ENCODE measurements at regions of chr6 and their contacts with region 1.

Region 1: GRCh38 chr6:33161354-33162331 is 30.6 kb downstream of the COL11A2 start:
- H3K4me3 Mint-ChIP-seq: peak overlapping the region; percentile 78
- H3K27ac Mint-ChIP-seq: peak overlapping the region; percentile 88
- H3K4me1 Mint-ChIP-seq: peaks cover 35% of the 10 kb centered on the region
- H3K27me3 Mint-ChIP-seq: peaks cover 20% of the 10 kb centered on the region

Region 2: DNA sequence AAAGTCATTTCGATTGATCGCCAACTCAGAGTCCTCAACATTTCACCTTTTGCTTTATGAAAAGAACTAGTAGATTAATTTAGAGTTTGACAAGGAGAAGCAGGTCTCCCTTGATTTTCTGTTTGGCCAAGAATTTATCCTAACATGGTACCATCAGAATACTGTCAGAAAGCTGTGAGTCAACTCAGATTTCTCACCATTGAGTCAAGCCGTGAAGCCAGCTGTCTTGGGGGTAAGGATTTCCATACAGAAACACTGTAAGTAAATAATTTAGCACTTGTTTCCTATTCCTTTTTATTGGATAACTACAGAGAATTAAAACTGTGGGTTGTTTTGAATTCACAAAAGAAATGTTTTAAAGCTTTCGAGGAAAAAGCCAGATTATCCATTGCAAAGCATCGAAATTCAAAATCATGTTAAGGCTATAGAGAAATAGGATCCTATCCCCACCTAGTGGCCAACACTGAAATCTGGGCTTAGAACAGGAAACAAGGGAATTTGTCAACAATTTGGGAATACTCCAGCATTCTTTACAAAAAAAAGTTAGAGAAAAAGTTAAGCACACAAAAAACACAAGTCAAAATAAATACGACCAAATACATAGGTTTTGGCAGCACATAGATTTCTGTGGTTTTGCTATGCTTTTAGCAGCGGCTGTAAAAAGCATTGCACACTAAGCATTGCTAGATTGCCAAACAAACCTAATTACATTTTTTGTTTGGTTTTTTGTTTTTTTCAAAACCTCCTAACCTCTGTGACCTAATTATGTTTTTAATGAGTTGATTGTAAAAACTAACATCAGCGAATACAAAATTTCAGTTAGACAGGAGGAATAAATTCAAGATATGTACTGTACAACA is 13.6 kb before region 1 on chr6:
- intact Hi-C with region 1: loop called (anchors 2 kb)
- H3K4me3 Mint-ChIP-seq: no peak overlapping the region
- H3K27ac Mint-ChIP-seq: no peak overlapping the region
- H3K4me1 Mint-ChIP-seq: peaks cover 14% of the 10 kb centered on the region
- H3K27me3 Mint-ChIP-seq: peaks cover 11% of the 10 kb centered on the region

Region 3: DNA sequence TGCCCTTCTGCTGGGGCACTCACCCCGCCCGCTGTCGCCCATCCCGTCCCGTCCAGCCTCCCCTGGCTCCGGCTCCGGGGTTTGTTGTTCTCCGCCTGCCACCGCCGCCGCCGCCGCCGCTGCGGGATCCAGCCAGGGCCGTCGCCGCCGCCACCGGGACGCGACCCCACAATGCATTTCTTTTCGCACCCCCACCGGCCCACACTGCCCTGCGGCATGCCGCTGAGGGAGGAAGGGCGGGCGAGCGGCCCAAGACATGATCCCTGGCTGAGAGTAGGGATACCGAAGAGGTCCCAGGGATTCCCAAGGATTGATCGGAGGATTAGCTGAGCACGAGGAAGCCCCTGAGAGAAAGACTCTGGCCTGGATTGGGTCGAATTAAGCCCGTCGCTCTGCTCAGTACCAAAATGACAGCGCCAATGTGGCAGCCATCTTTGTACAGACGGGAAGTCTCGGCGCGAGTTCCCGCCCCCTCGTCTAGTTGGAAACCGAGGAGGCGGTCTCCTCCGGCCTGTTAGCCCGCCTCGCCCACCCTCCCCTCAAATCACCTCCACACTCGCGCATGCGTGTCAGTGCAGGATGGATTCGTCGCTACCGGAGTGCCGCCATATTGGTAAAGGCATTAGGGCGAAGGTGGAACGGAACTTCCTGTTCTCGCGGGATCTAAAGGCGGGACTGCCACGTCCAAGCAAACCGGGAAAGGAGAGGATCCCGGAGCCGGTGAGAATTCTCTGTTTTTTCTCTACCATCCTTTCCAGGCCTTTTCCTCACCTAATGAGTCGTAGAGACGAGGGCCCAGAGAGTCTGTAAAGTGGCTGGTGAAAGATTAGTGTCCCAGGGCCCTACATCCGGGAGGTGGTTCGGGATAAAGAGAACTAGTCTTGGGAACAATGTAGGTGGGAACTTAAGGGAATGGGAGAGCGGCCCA is 38.8 kb after region 1 on chr6 and contains the starts of genes RXRB and SLC39A7:
- intact Hi-C with region 1: loop called (anchors 5 kb)
- H3K4me3 Mint-ChIP-seq: peak within 1 kb of the TSS; percentile 98
- H3K27ac Mint-ChIP-seq: peak within 1 kb of the TSS; percentile 99
- H3K4me1 Mint-ChIP-seq: peaks cover 85% of the 10 kb centered on the region
- H3K27me3 Mint-ChIP-seq: no peaks in the 10 kb centered on the region

Measured in dendritic cell treated with granulocyte-macrophage colony-stimulating factor and Interleukin-4, amounts not matched to agents 40 ng/mL and 50 ng/mL, for 4 days (primary cell).